Right ventricle myocardium inferior (tissue), 1 donor: ENCODE measurements at regions of chr16 and their contacts with region 1.

Region 1: DNA sequence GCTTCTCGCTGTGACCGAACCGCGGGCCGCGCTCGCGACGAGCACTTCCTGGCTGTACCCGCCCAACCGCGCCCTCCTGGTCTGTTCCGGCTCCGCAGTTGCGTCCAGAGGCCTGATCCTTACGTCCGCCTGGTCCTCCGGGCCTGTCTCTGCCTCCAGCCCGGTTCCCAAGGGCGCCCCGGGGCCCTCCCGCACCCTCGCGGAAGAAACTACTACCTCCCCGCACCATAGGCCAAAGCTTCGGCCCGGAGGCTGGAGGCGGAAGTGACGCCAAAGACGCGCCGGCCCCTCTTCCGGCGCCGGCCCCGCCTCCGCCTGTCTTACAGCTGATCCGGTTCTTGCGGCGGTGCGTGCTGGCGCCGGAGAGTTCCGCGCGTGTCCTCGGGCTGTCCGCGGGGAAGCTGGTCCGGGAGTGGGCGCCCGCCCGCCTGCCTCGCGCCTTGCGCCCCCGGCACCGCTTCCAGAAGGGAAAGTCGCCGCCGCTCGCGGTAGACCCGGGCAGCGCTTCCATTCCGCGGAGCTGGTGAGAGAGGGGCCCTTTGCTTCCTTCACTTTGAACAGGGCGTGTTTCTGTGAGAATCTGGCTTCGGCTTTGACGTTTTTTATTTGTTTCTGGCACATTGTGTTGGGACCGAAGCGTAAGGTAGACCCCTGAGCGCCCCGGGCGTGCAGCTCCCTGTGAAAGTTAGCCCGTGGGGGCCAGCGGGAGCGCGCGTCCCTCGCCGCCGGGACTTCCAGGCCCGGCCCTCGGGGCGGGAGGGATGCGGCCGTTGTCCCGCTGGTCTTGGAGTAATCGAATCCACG is at the start of gene ZNF778:
- DNase-seq: peak; percentile 94
- ATAC-seq: peak; percentile 96
- total RNA-seq, gene ZNF778: 6.9 TPM

Region 2: DNA sequence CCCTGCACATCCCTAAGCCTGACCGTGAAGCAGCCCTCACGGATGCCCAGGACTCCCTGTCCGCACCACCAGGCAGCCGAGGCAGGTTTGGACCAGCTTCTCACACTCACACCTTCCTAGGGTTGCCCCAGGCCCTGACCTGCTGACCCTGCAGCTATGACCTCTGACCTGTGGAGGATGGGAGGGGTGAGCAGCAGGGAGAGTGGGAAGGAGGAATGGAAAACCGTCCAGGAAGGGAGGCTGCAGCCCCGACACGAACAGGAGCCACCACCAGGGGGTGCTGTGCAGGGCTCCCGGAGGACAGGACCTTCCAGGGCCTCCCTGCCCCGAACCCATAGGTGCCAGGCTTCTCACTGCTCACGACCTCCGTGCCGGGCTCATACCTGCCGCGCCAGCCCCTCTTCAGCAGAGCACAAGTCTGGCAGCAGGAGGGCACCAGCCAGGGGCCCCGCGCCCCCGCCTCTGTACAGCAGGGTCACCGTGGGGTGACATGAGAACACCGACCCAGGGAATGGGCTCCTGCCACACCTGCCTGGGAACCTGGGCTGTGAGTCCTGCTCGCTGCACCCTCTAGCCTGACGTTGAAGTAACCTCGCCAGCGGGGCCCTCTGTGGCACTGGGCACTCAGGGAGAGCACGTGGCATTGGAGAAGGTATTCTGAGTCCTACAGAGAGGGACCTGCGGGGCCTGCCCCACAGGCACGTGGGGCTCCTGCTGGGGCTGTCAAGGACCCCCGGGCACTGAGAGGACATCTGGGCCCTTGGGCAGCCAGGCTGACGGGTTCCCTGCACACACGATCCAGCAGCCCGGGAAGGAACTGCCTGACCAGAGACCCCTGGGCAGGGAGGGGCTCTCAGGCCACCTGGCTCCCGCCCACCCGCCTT is 473.7 kb before region 1 on chr16:
- intact Hi-C with region 1: loop called (anchors 2 kb)
- DNase-seq: peak; percentile 91
- ATAC-seq: peak; percentile 60

Region 3: DNA sequence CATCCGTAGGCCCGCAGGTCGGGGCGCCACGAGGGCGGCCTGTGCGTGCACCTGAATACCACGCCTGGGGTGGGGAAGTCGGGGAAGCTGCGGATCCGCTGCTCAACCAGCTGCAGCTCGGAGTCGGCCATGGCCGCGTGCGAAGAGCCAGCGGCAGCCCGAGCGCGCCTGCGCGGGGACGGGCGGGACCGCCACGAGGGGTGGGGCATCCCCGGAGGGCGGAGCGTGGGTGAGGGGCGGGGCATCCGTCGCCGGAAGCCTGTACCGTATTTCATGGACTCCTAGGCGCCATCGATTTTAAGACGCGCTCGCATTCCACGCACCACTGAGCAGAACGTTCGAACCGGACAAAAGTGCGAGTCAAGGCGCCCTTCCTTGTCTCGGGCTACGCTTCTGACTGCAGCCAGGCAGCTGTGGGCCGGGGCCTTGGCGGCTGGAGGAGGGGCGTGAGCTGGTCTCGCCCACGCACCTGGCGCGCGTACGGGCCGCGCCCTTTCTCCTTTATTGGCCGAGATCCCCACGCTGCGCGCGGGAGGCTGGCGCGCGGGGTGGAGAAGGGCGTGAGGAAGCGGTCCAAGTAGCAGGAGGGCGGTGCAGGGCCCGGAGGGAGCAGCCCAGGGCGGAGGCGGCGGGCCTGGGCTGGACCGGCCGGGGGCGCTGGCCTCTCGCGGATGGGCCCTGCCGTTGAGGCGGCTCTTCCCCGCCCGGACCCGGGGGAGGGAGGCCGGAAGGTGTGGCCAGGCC is 405.6 kb before region 1 on chr16 and contains the start of gene APRT:
- intact Hi-C with region 1: loop called (anchors 5 kb)
- DNase-seq: peak; percentile 96
- ATAC-seq: peak; percentile 94
- total RNA-seq, gene APRT: 45.3 TPM

Region 4: DNA sequence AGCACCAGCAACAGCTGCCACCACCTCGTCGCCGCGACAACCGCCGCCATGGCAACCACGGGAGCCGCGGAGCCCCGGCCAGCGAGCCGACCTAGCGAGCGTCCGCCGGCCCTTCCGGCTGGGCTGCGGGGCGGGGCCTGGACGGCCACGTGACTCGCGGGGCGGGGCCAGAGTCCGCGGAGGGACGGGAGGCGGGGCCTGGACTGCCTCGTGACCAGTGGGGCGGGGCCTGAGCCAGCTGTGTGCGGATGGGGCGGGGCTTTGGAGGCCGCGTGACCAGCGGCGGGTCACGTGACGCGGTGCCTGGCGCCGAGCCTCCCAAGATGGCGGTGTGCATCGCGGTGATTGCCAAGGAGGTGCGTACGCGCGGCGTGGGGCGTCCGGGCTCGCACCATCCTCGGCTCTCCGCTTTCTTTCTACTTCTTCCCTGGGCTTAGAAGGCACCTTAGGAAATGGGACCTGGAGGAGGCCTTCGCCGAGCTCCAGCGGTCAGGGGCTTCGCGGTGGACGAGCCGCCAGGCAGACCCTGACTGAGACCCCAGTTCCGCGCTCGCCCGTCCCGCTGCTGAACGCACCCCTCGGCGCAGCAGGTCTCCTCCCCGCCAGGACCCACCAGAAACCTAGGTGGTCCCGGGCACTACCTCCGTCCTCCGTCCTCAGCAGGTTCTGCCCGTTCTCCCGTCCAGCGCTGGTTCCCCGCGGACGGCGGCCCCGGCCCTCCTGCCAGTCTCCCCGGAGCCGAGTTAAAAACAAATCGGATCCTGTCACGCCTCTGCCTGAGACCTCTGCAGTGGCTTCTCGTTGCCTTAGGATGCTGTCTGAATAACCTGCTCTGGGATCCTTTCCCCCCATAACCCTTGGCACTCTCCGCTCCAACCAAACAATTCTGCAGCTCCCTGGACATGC is 360.5 kb before region 1 on chr16 and contains the starts of genes GALNS and TRAPPC2L:
- intact Hi-C with region 1: loop called (anchors 5 kb)
- DNase-seq: peak; percentile 100
- ATAC-seq: peak; percentile 98
- total RNA-seq, gene GALNS: 15.8 TPM
- total RNA-seq, gene TRAPPC2L: 58.7 TPM